OCI-LY7 (cell line): ENCODE measurements at regions of chr3 and their contacts with region 1.

Region 1: DNA sequence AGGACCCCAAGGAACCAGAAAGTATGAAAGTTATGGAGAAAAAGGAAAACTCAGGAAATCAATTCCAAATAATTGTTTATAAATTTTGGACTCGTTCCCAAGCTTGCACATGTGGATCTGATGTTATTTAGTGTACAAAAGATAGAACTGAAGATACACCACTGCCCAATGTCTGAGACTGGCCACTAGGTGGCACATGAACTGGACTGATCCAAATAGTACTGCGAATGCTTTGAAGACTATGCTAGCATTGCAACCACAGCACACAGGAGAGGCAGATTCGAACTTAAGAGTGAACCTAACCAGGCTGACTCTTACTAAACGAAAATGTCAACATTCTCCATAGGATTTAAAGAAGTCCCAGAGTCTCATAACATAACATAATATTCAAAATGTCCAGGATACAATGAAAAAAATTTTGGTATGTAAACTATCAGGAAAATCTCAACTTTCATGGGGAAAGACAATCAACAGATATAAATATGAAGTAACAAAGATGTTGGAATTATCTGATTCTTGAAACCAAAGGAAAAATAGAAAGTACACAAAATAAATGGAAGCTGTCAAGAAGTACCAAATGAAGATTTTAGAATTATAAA is 596.7 kb downstream of the FGF12 start:
- DNase-seq: peak; percentile 83
- H3K4me3 ChIP-seq: no peak overlapping the region
- H3K27ac ChIP-seq: peak overlapping the region; percentile 40
- H3K4me1 ChIP-seq: peaks cover 42% of the 10 kb centered on the region
- CTCF ChIP-seq: peak; percentile 96

Region 2: GRCh38 chr3:192042116-192042515 is 88.5 kb before region 1 on chr3:
- CTCF ChIA-PET with region 1: no interaction called
- POLR2A ChIA-PET with region 1: interaction called, 5 read pairs
- intact Hi-C with region 1: loop called (anchors 2 kb)
- DNase-seq: peak; percentile 91
- H3K4me3 ChIP-seq: peak overlapping the region; percentile 6
- H3K27ac ChIP-seq: peak overlapping the region; percentile 85
- H3K4me1 ChIP-seq: peaks cover 56% of the 10 kb centered on the region
- CTCF ChIP-seq: no peak

Region 3: GRCh38 chr3:192183109-192183508 is 52.5 kb after region 1 on chr3:
- CTCF ChIA-PET with region 1: no interaction called
- POLR2A ChIA-PET with region 1: interaction called, 4 read pairs
- intact Hi-C with region 1: loop called (anchors 1 kb)
- DNase-seq: peak; percentile 91
- H3K4me3 ChIP-seq: peak overlapping the region; percentile 57
- H3K27ac ChIP-seq: peak overlapping the region; percentile 99
- H3K4me1 ChIP-seq: peaks cover 75% of the 10 kb centered on the region
- CTCF ChIP-seq: no peak

Region 4: GRCh38 chr3:192212335-192212734 is 81.7 kb after region 1 on chr3:
- CTCF ChIA-PET with region 1: interaction called, 3 read pairs
- POLR2A ChIA-PET with region 1: interaction called, 3 read pairs
- intact Hi-C with region 1: loop called (anchors 1 kb)
- DNase-seq: peak; percentile 44
- H3K4me3 ChIP-seq: no peak overlapping the region
- H3K27ac ChIP-seq: no peak overlapping the region
- H3K4me1 ChIP-seq: no peaks in the 10 kb centered on the region
- CTCF ChIP-seq: peak; percentile 77

Region 5: DNA sequence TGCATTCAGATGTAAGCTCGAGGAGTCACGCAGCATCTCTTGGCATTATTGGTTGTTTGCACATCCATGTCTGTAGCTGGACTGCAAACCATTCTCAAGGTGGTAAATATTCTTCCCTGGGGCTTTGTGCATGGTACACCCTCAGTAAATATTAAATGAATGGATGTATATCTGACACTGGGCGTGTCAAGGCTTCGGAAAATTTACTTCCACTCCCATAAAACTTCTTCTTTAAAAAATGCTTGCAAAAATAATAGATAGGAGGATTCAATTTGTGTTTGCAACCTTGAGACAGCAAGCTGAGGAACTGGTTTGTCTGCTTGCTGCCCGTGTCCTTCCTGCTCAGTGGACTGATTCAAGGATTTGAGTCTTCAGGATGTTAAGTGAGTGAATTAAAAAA is 142.9 kb after region 1 on chr3:
- CTCF ChIA-PET with region 1: no interaction called
- POLR2A ChIA-PET with region 1: no interaction called
- intact Hi-C with region 1: no loop called
- DNase-seq: no peak
- H3K4me3 ChIP-seq: no peak overlapping the region
- H3K27ac ChIP-seq: no peak overlapping the region
- H3K4me1 ChIP-seq: no peaks in the 10 kb centered on the region
- CTCF ChIP-seq: no peak

Region 6: GRCh38 chr3:192303235-192303634 is 172.6 kb after region 1 on chr3:
- CTCF ChIA-PET with region 1: no interaction called
- POLR2A ChIA-PET with region 1: no interaction called
- intact Hi-C with region 1: loop called (anchors 1 kb)
- DNase-seq: no peak
- H3K4me3 ChIP-seq: no peak overlapping the region
- H3K27ac ChIP-seq: no peak overlapping the region
- H3K4me1 ChIP-seq: no peaks in the 10 kb centered on the region
- CTCF ChIP-seq: no peak